Heart left ventricle (tissue), 16 donors: ENCODE measurements at regions of chr1 and their contacts with region 1.

Region 1: GRCh38 chr1:233613252-233614174 is at the start of gene KCNK1:
- DNase-seq: peak; percentile 25 to 69 (median 64)
- ATAC-seq: peak; percentile 72 to 87 (median 83)
- H3K4me3 ChIP-seq: peak within 1 kb of the TSS; percentile 46 to 78 (median 63)
- H3K27ac ChIP-seq: peak within 1 kb of the TSS in 9 of 12 donors; percentile 42 to 68 (median 61)
- H3K4me1 ChIP-seq: peaks cover 0 to 15% (median 0%) of the 10 kb centered on the region in 12 donors
- H3K27me3 ChIP-seq: peaks cover 0 to 48% (median 4%) of the 10 kb centered on the region in 9 donors
- CTCF ChIP-seq: no peak
- POLR2A ChIP-seq: peak in 1 of 2 donors; percentile 45
- total RNA-seq, gene KCNK1: 5.9 to 28.3 (median 10.5) TPM

Region 2: DNA sequence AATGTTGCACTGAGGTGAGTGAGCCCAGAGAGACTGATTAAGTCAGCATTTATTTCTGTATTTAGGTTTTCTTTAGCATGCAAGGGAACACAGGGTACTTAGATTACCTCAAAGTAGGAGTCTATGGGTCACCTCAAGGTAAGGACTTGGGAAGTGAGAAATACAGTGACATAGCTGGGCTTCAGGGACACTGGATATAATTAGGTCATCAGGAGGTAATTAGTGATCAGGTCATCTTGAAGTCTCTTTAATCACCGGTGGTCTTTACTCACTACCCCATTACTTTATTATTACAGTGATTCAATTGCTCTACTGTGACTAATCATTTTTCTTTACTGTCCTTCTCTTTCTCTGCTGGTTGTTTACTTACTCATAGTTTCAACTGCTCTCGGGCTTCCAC is 59.5 kb before region 1 on chr1:
- intact Hi-C with region 1: no loop called
- DNase-seq: no peak
- ATAC-seq: no peak
- H3K4me3 ChIP-seq: no peak overlapping the region
- H3K27ac ChIP-seq: no peak overlapping the region
- H3K4me1 ChIP-seq: no peaks in the 10 kb centered on the region
- H3K27me3 ChIP-seq: no peaks in the 10 kb centered on the region
- CTCF ChIP-seq: no peak
- POLR2A ChIP-seq: no peak

Region 3: DNA sequence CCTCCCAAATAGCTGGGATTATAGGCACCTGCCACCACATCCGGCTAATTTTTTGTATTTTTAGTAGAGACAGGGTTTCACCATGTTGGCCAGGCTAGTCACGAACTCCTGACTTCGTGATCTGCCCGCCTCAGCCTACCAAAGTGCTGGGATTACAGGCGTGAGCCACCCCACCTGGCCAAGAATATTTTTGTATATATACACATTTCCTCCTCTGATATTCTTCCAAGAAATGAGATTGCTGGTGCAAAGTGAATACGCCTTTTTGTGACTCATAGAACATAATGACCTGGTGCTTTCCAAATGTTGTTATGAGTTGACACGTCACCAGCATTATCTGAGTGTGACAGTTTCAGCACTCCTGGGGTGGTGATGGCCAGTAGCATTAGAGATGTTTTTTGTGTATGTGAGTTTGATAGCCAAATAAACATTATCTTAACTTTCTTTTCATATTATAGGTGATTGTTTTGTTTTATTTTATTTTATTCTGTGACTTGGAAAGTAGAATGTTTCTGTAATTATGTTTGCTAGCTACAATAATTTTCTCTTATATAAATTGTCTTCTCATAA is 55.3 kb after region 1 on chr1:
- intact Hi-C with region 1: loop called in 1 of 10 experiments (anchors 2 kb)
- DNase-seq: peak in 2 of 5 donors; percentile 17 to 34
- ATAC-seq: peak; percentile 64 to 86 (median 81)
- H3K4me3 ChIP-seq: no peak overlapping the region
- H3K27ac ChIP-seq: peak overlapping the region; percentile 5 to 82 (median 61)
- H3K4me1 ChIP-seq: peaks cover 0 to 42% (median 5%) of the 10 kb centered on the region in 12 donors
- H3K27me3 ChIP-seq: no peaks in the 10 kb centered on the region
- CTCF ChIP-seq: no peak
- POLR2A ChIP-seq: no peak

Region 4: DNA sequence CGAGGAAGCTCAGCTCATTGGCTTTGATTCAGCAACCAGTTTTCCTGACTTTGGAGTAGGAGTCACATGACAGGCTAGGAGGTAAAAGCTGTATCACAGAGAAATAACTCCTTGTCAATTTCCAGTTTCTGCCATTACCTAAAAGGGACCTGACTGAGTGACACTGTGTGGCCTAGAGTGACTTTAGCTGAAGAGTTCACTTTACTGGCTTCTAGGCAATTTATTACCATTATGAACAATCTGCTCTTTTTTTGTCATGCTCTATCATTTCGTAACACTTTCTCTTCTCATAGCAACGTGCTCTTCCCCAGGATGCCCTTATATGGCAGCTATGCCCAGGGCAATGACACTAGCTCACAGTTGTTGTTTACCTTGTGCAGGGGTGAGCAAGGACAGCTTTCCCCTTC is 107.6 kb after region 1 on chr1:
- intact Hi-C with region 1: loop called in 1 of 10 experiments (anchors 5 kb)
- DNase-seq: no peak
- ATAC-seq: peak in 2 of 4 donors; percentile 44 to 68
- H3K4me3 ChIP-seq: no peak overlapping the region
- H3K27ac ChIP-seq: peak overlapping the region in 11 of 12 donors; percentile 33 to 93 (median 80)
- H3K4me1 ChIP-seq: peaks cover 0 to 37% (median 5%) of the 10 kb centered on the region in 12 donors
- H3K27me3 ChIP-seq: no peaks in the 10 kb centered on the region
- CTCF ChIP-seq: no peak
- POLR2A ChIP-seq: no peak

Region 5: GRCh38 chr1:233730809-233731208 is 117.3 kb after region 1 on chr1:
- intact Hi-C with region 1: loop called in 2 of 10 experiments (anchors 5 to 10 kb)
- DNase-seq: peak in 1 of 5 donors; percentile 43
- ATAC-seq: peak in 2 of 4 donors; percentile 22 to 42
- H3K4me3 ChIP-seq: no peak overlapping the region
- H3K27ac ChIP-seq: no peak overlapping the region
- H3K4me1 ChIP-seq: peaks cover 0 to 6% (median 0%) of the 10 kb centered on the region in 12 donors
- H3K27me3 ChIP-seq: no peaks in the 10 kb centered on the region
- CTCF ChIP-seq: peak in 1 of 12 donors; percentile 4
- POLR2A ChIP-seq: no peak

Region 6: GRCh38 chr1:233744779-233745513 is 131.4 kb after region 1 on chr1:
- intact Hi-C with region 1: no loop called
- DNase-seq: no peak
- ATAC-seq: no peak
- H3K4me3 ChIP-seq: no peak overlapping the region
- H3K27ac ChIP-seq: no peak overlapping the region
- H3K4me1 ChIP-seq: no peaks in the 10 kb centered on the region
- H3K27me3 ChIP-seq: no peaks in the 10 kb centered on the region
- CTCF ChIP-seq: no peak
- POLR2A ChIP-seq: no peak